ENCODE measurements at regions of chr6 and their contacts with region 1.

Region 1: GRCh38 chr6:13674533-13675190 is 37.0 kb downstream of the RANBP9 start:
- DNase-seq: no peak
- ATAC-seq: no peak
- H3K4me3 ChIP-seq: no peak overlapping the region
- H3K4me3 Mint-ChIP-seq: peak overlapping the region in 3 of 10 donors; percentile 0 to 17 (median 5)
- H3K27ac ChIP-seq: no peak overlapping the region
- H3K27ac Mint-ChIP-seq: peak overlapping the region in 4 of 9 donors; percentile 9 to 63 (median 28)
- H3K4me1 ChIP-seq: peaks cover under 1 to 23% of the 10 kb centered on the region in 2 donors
- H3K4me1 Mint-ChIP-seq: peaks cover 39 to 80% (median 72%) of the 10 kb centered on the region in 7 donors
- H3K27me3 ChIP-seq: no peaks in the 10 kb centered on the region
- H3K27me3 Mint-ChIP-seq: no peaks in the 10 kb centered on the region

Region 2: GRCh38 chr6:13635948-13636658 is 38.6 kb before region 1 on chr6:
- CTCF ChIA-PET with region 1: interaction called, 4 read pairs
- POLR2A ChIA-PET with region 1: interaction called, 3 read pairs
- intact Hi-C with region 1: loop called in 1 of 2 experiments (anchors 5 kb)
- DNase-seq: peak in 1 of 9 donors; percentile 13
- ATAC-seq: peak; percentile 34
- H3K4me3 ChIP-seq: no peak overlapping the region
- H3K4me3 Mint-ChIP-seq: peak overlapping the region in 5 of 10 donors; percentile 9 to 69 (median 51)
- H3K27ac ChIP-seq: peak overlapping the region; percentile 42
- H3K27ac Mint-ChIP-seq: peak overlapping the region in 8 of 9 donors; percentile 49 to 87 (median 74)
- H3K4me1 ChIP-seq: peaks cover 0 to 6% of the 10 kb centered on the region in 2 donors
- H3K4me1 Mint-ChIP-seq: peaks cover 15 to 37% (median 31%) of the 10 kb centered on the region in 7 donors
- H3K27me3 ChIP-seq: no peaks in the 10 kb centered on the region
- H3K27me3 Mint-ChIP-seq: no peaks in the 10 kb centered on the region

Region 3: DNA sequence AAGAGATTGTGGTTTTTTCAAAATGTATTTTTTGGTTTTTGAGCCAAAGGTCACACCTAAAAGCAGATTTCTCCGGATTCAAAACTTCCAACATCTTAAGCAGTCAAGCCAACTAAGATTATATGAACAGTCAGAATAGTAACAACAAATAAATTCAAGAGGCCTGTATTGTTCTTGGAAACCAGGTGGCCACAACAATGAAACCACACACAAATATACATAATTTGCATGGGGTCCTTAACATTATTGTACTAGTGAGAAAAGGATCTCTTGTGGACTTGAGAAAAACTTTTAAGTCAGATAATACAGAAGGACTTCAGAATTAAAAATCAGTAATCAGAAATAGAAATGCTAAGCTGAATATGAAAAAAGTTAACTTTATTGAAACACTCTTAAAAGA is 19.0 kb before region 1 on chr6:
- CTCF ChIA-PET with region 1: interaction called, 4 read pairs
- POLR2A ChIA-PET with region 1: interaction called, 7 read pairs
- intact Hi-C with region 1: loop called in 1 of 2 experiments (anchors 2 kb)
- DNase-seq: no peak
- ATAC-seq: no peak
- H3K4me3 ChIP-seq: no peak overlapping the region
- H3K4me3 Mint-ChIP-seq: no peak overlapping the region
- H3K27ac ChIP-seq: no peak overlapping the region
- H3K27ac Mint-ChIP-seq: peak overlapping the region in 1 of 9 donors; percentile 59
- H3K4me1 ChIP-seq: peaks cover 0 to 12% of the 10 kb centered on the region in 2 donors
- H3K4me1 Mint-ChIP-seq: peaks cover 14 to 48% (median 36%) of the 10 kb centered on the region in 7 donors
- H3K27me3 ChIP-seq: no peaks in the 10 kb centered on the region
- H3K27me3 Mint-ChIP-seq: no peaks in the 10 kb centered on the region

Region 4: DNA sequence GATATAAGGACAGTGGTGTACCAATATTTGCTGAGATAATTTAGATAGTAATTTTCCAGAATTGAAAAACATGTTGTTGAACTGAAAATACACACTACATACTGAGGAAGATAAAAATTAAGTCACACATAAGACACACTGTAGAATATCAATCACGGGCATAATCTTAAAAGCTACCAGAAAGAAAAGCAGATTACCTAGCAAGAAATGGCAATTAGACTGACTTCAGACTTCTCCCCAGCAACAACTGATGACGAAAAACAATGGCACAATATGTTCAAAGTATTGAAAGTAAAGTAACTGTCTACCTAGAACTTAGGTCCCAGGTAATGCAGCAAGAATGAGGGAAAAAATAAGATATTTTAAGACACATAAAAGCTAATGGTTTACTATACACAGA is 13.0 kb before region 1 on chr6:
- CTCF ChIA-PET with region 1: no interaction called
- POLR2A ChIA-PET with region 1: interaction called, 7 read pairs
- intact Hi-C with region 1: loop called in 1 of 2 experiments (anchors 1 kb)
- DNase-seq: no peak
- ATAC-seq: no peak
- H3K4me3 ChIP-seq: no peak overlapping the region
- H3K4me3 Mint-ChIP-seq: peak overlapping the region in 6 of 10 donors; percentile 5 to 44 (median 26)
- H3K27ac ChIP-seq: no peak overlapping the region
- H3K27ac Mint-ChIP-seq: peak overlapping the region in 2 of 9 donors; percentile 14 to 18
- H3K4me1 ChIP-seq: peaks cover 18 to 43% of the 10 kb centered on the region in 2 donors
- H3K4me1 Mint-ChIP-seq: peaks cover 57 to 93% (median 85%) of the 10 kb centered on the region in 7 donors
- H3K27me3 ChIP-seq: no peaks in the 10 kb centered on the region
- H3K27me3 Mint-ChIP-seq: no peaks in the 10 kb centered on the region

Region 5: GRCh38 chr6:14046476-14047068 is 371.9 kb after region 1 on chr6:
- CTCF ChIA-PET with region 1: no interaction called
- POLR2A ChIA-PET with region 1: no interaction called
- intact Hi-C with region 1: no loop called
- DNase-seq: peak in 6 of 9 donors; percentile 26 to 47 (median 38)
- ATAC-seq: peak; percentile 80
- H3K4me3 ChIP-seq: no peak overlapping the region
- H3K4me3 Mint-ChIP-seq: no peak overlapping the region
- H3K27ac ChIP-seq: no peak overlapping the region
- H3K27ac Mint-ChIP-seq: peak overlapping the region in 1 of 9 donors; percentile 5
- H3K4me1 ChIP-seq: no peaks in the 10 kb centered on the region
- H3K4me1 Mint-ChIP-seq: peaks cover 0 to 4% (median 0%) of the 10 kb centered on the region in 7 donors
- H3K27me3 ChIP-seq: no peaks in the 10 kb centered on the region
- H3K27me3 Mint-ChIP-seq: peaks cover 12 to 48% (median 32%) of the 10 kb centered on the region in 5 donors

Measured in naive thymus-derived CD4-positive, alpha-beta T cell (primary cell).